ENCODE measurements at regions of chr11 and their contacts with region 1.

Region 1: DNA sequence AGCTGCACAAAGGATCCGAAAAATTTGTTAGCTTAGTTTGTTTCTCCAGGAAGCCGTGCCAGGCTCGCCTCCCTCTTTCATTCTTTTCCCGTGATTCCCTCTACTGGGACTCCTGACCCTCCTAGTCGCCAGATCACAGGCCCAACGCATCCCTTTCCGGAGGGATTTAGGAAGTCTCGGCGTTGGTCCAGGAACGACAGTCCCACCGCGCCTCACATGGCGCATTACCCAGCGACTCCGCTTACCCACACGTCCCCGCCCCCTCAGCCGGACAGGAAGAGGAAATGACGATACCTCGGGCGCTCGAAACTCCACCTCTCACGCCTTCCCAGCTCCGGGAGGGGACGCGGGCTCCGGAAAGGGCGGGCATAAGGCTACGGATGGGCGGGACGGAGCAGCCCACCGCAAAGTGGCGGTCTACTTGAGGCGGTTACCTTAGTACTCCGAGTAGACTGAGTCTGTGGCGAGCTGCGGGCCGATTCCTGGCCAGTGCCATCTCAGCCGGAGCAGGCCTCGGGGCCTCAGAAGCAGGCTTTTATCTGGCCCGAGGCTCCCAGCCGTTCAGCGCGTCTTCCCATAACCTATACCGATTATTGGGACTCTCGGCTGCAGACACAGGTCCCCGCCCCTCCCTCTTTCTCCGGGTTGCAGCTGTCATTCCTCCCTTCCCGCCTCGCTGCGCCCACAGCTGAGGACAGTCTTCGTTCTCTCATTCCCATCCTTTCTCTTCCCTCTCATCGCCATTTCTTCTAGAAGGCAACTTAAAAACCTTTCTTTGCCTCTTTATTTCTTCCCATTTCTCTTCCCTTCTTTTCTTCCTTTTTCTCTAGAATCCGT is at the start of gene CCDC15:
- DNase-seq: peak; percentile 91
- ATAC-seq: peak; percentile 85
- H3K4me3 Mint-ChIP-seq: no peak within 1 kb of the TSS
- H3K27ac Mint-ChIP-seq: no peak within 1 kb of the TSS
- H3K4me1 Mint-ChIP-seq: peaks cover 11% of the 10 kb centered on the region
- H3K27me3 Mint-ChIP-seq: no peaks in the 10 kb centered on the region
- total RNA-seq, gene CCDC15: 5.9 to 6.6 TPM

Region 2: GRCh38 chr11:124875943-124876817 is 77.8 kb before region 1 on chr11:
- POLR2A ChIA-PET with region 1: interaction called, 20 read pairs
- DNase-seq: peak; percentile 91
- ATAC-seq: peak; percentile 93
- H3K4me3 Mint-ChIP-seq: peak overlapping the region; percentile 87
- H3K27ac Mint-ChIP-seq: peak overlapping the region; percentile 90
- H3K4me1 Mint-ChIP-seq: peaks cover 16% of the 10 kb centered on the region
- H3K27me3 Mint-ChIP-seq: peaks cover 42% of the 10 kb centered on the region

Region 3: DNA sequence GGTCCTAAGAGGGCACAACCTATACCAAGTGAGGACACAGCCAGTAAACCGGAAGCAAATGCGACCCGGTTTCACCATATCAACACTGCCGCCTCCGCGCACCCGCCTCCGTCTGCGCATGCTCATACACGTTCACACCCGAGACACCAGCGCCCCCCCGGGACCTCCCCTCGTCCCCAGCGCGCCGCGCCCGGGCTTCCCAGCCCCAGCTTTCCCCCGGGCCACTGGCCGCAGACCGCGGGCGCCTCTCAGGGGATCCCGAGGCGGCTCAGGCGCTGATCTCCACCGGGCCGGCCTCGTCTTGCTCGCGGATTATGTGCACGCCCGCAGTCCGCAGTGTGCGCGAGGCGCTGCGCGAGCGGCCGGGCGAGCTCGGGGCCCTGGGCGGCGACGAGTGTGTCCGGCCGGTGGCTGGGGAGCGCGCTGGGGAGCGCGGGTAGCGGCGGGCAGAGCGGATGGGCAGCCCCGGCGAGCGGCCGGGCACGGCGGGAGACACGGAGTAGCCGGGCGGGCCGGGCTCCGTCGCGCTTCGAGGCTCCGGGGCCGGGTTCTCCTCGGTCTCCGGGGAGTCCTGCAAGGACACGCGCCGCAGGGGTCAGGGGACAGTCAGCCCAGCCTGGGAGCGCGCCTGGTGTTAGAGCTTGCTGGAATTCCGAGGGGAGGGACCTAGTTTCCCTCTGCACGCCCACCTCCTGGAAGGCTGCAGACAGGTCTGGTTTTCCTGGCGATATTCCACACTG is 32.9 kb before region 1 on chr11:
- POLR2A ChIA-PET with region 1: interaction called, 20 read pairs
- DNase-seq: peak; percentile 85
- ATAC-seq: peak; percentile 89
- H3K4me3 Mint-ChIP-seq: peak overlapping the region; percentile 56
- H3K27ac Mint-ChIP-seq: peak overlapping the region; percentile 49
- H3K4me1 Mint-ChIP-seq: peaks cover 20% of the 10 kb centered on the region
- H3K27me3 Mint-ChIP-seq: no peaks in the 10 kb centered on the region

Region 4: DNA sequence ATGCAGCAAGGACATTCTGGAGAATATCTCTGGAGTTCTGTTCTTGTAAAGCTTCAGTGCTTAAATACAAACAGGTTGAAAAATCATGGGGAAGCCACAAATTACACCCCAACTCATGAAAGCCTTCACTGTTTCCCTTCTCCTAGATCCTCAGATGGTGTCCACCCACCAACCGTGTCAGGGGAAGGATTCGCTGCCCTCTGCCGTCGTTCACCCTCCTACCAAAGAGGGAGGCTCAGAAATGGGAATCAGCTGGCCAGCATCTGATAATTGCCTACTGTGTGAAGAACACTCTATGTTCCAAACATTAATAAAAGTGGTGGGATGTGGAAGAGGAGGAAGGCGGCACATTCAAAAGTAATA is 10.7 kb before region 1 on chr11:
- POLR2A ChIA-PET with region 1: interaction called, 14 read pairs
- DNase-seq: no peak
- ATAC-seq: no peak
- H3K4me3 Mint-ChIP-seq: no peak overlapping the region
- H3K27ac Mint-ChIP-seq: no peak overlapping the region
- H3K4me1 Mint-ChIP-seq: peaks cover 11% of the 10 kb centered on the region
- H3K27me3 Mint-ChIP-seq: no peaks in the 10 kb centered on the region

Region 5: GRCh38 chr11:125111343-125112207 is 157.6 kb after region 1 on chr11 and contains the start of gene TMEM218:
- POLR2A ChIA-PET with region 1: interaction called, 11 read pairs
- DNase-seq: peak; percentile 90
- ATAC-seq: peak; percentile 99
- H3K4me3 Mint-ChIP-seq: peak within 1 kb of the TSS; percentile 99
- H3K27ac Mint-ChIP-seq: peak within 1 kb of the TSS; percentile 96
- H3K4me1 Mint-ChIP-seq: peaks cover 16% of the 10 kb centered on the region
- H3K27me3 Mint-ChIP-seq: peaks cover 8% of the 10 kb centered on the region
- total RNA-seq, gene TMEM218: 13.1 to 14.3 TPM

Measured in activated naive CD8-positive, alpha-beta T cell treated with anti-CD3 and anti-CD28 coated beads, Interleukin-2, amount 10 ng/mL, durations not matched to agents 7 days and 5 days (primary cell).